ENCODE measurements at regions of chr20 and their contacts with region 1.

Region 1: DNA sequence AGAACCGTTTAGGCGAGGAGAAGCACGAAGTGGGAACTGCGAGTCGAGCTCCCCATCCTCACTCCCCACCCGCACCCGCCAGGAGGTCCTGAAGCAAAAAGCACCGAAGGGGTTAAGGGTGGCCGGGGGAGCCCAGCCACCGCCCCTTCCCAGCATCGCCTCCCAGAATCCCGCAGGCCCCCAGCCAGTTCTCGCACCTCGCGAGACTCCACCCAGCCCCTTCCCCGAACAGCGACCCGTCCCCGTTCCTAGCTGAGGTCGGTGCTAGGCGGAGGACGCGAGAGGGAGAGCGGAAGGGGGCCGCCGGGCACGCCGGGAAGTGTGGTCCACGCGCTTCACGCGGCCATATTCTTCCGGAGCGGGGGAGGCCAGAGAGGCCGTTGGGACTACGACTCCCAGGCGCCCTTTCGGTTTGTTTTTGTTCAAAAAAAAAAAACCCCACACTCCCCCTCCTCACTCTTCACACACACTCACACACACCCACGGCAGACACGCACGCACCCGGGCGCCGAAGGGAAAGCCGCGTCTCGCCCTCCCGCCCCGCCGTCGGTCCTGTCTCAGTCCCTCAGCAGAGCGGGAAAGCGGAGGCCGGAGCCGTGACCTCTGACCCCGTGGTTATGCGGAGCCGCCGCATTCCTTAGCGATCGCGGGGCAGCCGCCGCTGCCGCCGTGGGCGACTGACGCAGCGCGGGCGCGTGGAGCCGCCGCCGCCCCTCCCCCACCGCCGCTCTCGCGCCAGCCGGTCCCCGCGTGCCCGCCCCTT is at the start of gene ASXL1:
- DNase-seq: peak; percentile 95 to 100 (median 96)

Region 2: DNA sequence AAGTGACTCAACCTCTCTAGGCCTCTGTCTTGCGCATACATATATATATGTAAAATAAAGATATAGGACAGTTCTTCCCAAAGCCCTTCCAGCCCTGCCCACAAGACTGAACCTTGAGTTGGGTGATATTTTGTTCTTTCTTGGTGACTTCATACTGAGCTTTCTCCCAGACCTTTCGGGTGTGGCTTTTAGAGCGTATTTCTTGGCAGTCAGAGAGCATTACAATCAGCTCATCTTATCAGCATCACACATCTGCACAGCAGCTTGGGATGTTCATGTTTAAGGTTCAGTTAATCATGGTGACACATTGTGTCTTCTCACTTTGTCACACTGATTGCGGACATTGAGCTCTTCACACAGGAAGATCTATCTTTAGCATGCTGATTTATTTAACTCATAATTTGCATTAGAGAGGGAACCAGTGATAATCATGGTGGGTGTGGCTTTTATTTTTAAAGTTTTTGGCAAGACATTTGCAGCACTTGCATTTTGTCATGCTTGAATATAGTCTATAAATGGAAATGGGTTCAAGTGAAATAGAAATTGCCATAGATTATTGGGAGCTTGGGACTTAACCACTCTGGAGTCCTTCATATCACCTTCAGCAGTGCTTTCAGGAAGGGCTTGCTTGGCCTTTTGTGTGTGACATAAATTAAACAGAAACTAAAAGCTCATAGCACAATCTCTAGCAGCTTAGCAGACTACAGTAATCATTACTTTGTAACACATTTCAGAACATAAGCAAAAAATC is 72.3 kb before region 1 on chr20:
- intact Hi-C with region 1: loop called (anchors 10 kb)
- DNase-seq: peak in 1 of 10 donors; percentile 28

Region 3: GRCh38 chr20:32484958-32485769 is 127.1 kb after region 1 on chr20:
- intact Hi-C with region 1: loop called (anchors 2 kb)
- DNase-seq: peak; percentile 72 to 96 (median 86)

Region 4: GRCh38 chr20:32762149-32762753 is 404.2 kb after region 1 on chr20 and contains the start of gene DNMT3B:
- intact Hi-C with region 1: no loop called
- DNase-seq: peak; percentile 41 to 95 (median 60)

Measured in posterior cingulate gyrus (tissue), 11 donors.